Right cardiac atrium (tissue), 5 donors: ENCODE measurements at regions of chr7 and their contacts with region 1.

Region 1: GRCh38 chr7:122699017-122699416 is at the start of gene RNF133:
- DNase-seq: no peak
- ATAC-seq: no peak
- H3K4me3 ChIP-seq: no peak within 1 kb of the TSS
- H3K27ac ChIP-seq: no peak within 1 kb of the TSS
- H3K4me1 ChIP-seq: peaks cover 5% of the 10 kb centered on the region
- H3K27me3 ChIP-seq: no peaks in the 10 kb centered on the region
- total RNA-seq, gene RNF133: 0.21 to 0.39 (median 0.24) TPM

Region 2: DNA sequence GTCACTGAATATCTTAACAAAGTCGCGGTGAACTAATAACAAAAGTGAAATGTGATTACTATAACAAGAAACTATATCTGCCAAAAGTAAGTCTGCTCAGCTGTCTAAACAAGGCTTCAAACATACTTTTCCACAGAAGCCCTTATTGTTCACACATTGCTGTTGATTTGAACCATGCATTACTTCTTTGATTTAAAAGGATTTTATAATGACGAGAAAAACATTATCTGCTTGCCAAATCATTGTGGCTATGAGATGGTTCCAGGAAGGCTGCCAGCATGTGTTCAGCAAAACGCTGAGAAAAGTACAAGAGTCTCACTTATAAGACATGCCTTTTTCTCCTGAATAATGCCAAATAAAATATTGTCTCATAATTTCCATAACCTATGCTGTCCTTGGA is 24.5 kb before region 1 on chr7:
- intact Hi-C with region 1: loop called in 1 of 4 experiments (anchors 2 kb)
- DNase-seq: peak in 1 of 3 donors; percentile 62
- ATAC-seq: peak in 1 of 2 donors; percentile 46
- H3K4me3 ChIP-seq: no peak overlapping the region
- H3K27ac ChIP-seq: no peak overlapping the region
- H3K4me1 ChIP-seq: no peaks in the 10 kb centered on the region
- H3K27me3 ChIP-seq: no peaks in the 10 kb centered on the region